ENCODE measurements at regions of chr2 and their contacts with region 1.

Region 1: GRCh38 chr2:160109936-160110673 is 47.7 kb upstream of the PLA2R1 start:
- DNase-seq: peak; percentile 53
- CTCF ChIP-seq: peak; percentile 61

Region 2: GRCh38 chr2:159677654-159678053 is 432.5 kb before region 1 on chr2:
- in situ Hi-C with region 1: no loop called
- DNase-seq: peak; percentile 19
- CTCF ChIP-seq: no peak

Region 3: DNA sequence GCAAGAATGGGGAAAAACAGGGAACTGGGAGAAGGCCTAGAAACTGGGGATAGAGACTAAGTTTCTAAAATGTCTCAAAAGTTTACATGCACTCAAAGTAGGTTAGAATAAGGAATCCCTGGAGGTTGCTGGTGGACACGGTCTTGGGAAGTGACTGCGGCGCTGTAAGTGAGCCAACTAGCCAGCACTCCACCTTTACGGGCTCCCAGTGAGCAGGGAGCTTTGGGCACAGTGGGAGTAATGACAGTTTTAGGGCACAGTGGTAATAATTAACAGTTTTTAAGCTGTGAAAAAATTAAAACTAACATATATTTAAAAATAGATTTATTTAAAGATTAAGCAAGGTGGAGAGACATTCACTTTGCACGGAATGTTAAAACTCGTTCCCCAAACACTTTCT is 291.2 kb before region 1 on chr2:
- in situ Hi-C with region 1: no loop called
- DNase-seq: no peak
- CTCF ChIP-seq: no peak

Region 4: GRCh38 chr2:160006475-160006874 is 103.6 kb before region 1 on chr2:
- in situ Hi-C with region 1: no loop called
- DNase-seq: no peak
- CTCF ChIP-seq: no peak

Region 5: GRCh38 chr2:160207804-160208661 is 97.9 kb after region 1 on chr2:
- in situ Hi-C with region 1: loop called (anchors 10 kb)
- DNase-seq: no peak
- CTCF ChIP-seq: no peak

Region 6: DNA sequence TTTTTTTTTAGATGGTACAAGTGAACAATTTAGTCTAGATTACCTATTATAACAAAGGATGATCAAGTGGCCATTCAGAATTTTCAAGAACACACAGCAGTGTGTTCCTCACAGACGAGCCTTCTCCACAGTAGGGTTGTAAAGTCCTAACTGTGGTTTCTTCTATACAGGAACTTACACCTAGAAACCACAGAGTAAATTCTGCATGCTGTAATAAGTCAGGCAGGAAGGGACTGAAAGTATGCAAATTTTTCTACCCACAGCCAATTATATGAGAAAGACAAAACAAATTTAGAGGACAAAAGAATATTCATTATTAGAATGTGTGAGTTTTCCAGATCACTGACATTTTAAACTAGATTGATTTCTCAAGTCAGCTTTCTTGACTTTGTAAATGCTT is 284.0 kb after region 1 on chr2:
- in situ Hi-C with region 1: no loop called
- DNase-seq: peak; percentile 46
- CTCF ChIP-seq: no peak